ENCODE measurements at regions of chr6 and their contacts with region 1.

Region 1: DNA sequence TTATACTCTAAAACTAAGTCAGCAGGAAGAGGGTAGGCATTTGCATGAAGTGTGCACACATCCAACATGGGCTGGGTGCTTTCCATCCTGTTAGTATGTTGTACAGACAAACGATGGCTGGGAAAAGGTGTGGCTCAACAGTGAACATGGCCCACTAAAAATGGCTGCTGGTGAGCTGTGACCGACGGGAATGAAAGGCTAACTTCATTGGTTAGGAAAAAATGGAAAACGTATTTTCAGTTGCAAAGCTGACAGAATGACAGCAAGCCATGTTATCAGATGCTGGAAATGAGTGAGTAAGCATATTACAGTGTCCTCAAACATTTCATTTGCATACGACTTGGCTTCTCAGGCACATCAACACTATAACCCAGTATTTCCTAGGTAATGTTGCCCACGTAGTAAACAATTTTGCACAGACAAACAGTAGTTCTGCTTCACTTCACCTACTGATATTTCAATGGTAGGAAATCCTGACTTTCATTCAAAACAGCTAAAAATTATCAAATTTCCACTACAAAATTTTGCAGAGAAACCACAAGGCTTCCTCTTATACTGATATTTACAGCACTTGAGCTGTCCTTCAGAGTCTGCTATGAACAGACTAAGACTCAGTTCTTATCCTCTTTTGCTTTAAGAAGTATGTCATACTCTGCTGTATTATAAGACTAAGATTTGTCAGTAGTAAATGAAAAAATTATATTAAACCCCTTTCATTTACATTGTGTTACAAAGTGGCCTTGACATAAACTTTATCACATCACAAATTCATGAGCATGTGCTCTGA is 98.9 kb downstream of the IRF4 start:
- DNase-seq: peak in 1 of 5 donors; percentile 44
- H3K4me3 ChIP-seq: no peak overlapping the region
- H3K4me3 Mint-ChIP-seq: peak overlapping the region in 7 of 8 donors; percentile 57 to 87 (median 74)
- H3K27ac ChIP-seq: no peak overlapping the region
- H3K27ac Mint-ChIP-seq: peak overlapping the region; percentile 38 to 90 (median 81)
- H3K4me1 ChIP-seq: peaks cover 65% of the 10 kb centered on the region
- H3K4me1 Mint-ChIP-seq: peaks cover 55 to 68% (median 62%) of the 10 kb centered on the region in 4 donors
- H3K27me3 ChIP-seq: no peaks in the 10 kb centered on the region
- H3K27me3 Mint-ChIP-seq: no peaks in the 10 kb centered on the region

Region 2: GRCh38 chr6:399785-400534 is 90.5 kb before region 1 on chr6:
- CTCF ChIA-PET with region 1: no interaction called
- POLR2A ChIA-PET with region 1: interaction called, 3 read pairs
- intact Hi-C with region 1: loop called (anchors 5 kb)
- DNase-seq: peak; percentile 22 to 67 (median 29)
- H3K4me3 ChIP-seq: no peak overlapping the region
- H3K4me3 Mint-ChIP-seq: peak overlapping the region in 7 of 8 donors; percentile 17 to 55 (median 47)
- H3K27ac ChIP-seq: no peak overlapping the region
- H3K27ac Mint-ChIP-seq: peak overlapping the region; percentile 8 to 79 (median 55)
- H3K4me1 ChIP-seq: peaks cover 40% of the 10 kb centered on the region
- H3K4me1 Mint-ChIP-seq: peaks cover 26 to 49% (median 43%) of the 10 kb centered on the region in 4 donors
- H3K27me3 ChIP-seq: no peaks in the 10 kb centered on the region
- H3K27me3 Mint-ChIP-seq: peaks cover 0 to 1% of the 10 kb centered on the region in 2 donors

Region 3: GRCh38 chr6:446418-447366 is 43.8 kb before region 1 on chr6:
- CTCF ChIA-PET with region 1: interaction called, 6 read pairs
- POLR2A ChIA-PET with region 1: interaction called, 20 read pairs
- intact Hi-C with region 1: loop called (anchors 5 kb)
- DNase-seq: peak; percentile 67 to 96 (median 76)
- H3K4me3 ChIP-seq: peak overlapping the region; percentile 28 to 60
- H3K4me3 Mint-ChIP-seq: peak overlapping the region; percentile 78 to 92 (median 82)
- H3K27ac ChIP-seq: peak overlapping the region; percentile 54
- H3K27ac Mint-ChIP-seq: peak overlapping the region; percentile 81 to 95 (median 88)
- H3K4me1 ChIP-seq: peaks cover 53% of the 10 kb centered on the region
- H3K4me1 Mint-ChIP-seq: peaks cover 33 to 54% (median 48%) of the 10 kb centered on the region in 4 donors
- H3K27me3 ChIP-seq: no peaks in the 10 kb centered on the region
- H3K27me3 Mint-ChIP-seq: peaks cover 0 to 2% of the 10 kb centered on the region in 2 donors

Region 4: GRCh38 chr6:474453-475185 is 15.8 kb before region 1 on chr6:
- CTCF ChIA-PET with region 1: interaction called, 9 read pairs
- POLR2A ChIA-PET with region 1: interaction called, 13 read pairs
- intact Hi-C with region 1: loop called (anchors 2 kb)
- DNase-seq: peak; percentile 66 to 77 (median 68)
- H3K4me3 ChIP-seq: peak overlapping the region; percentile 32 to 38
- H3K4me3 Mint-ChIP-seq: peak overlapping the region; percentile 30 to 80 (median 75)
- H3K27ac ChIP-seq: no peak overlapping the region
- H3K27ac Mint-ChIP-seq: peak overlapping the region in 5 of 7 donors; percentile 22 to 88 (median 59)
- H3K4me1 ChIP-seq: peaks cover 34% of the 10 kb centered on the region
- H3K4me1 Mint-ChIP-seq: peaks cover 33 to 44% (median 37%) of the 10 kb centered on the region in 4 donors
- H3K27me3 ChIP-seq: no peaks in the 10 kb centered on the region
- H3K27me3 Mint-ChIP-seq: no peaks in the 10 kb centered on the region

Region 5: GRCh38 chr6:506508-506907 is 16.1 kb after region 1 on chr6:
- CTCF ChIA-PET with region 1: interaction called, 6 read pairs
- POLR2A ChIA-PET with region 1: interaction called, 10 read pairs
- intact Hi-C with region 1: loop called (anchors 2 kb)
- DNase-seq: no peak
- H3K4me3 ChIP-seq: no peak overlapping the region
- H3K4me3 Mint-ChIP-seq: peak overlapping the region in 1 of 8 donors; percentile 45
- H3K27ac ChIP-seq: no peak overlapping the region
- H3K27ac Mint-ChIP-seq: peak overlapping the region in 2 of 7 donors; percentile 51 to 62
- H3K4me1 ChIP-seq: peaks cover 50% of the 10 kb centered on the region
- H3K4me1 Mint-ChIP-seq: peaks cover 55 to 81% (median 70%) of the 10 kb centered on the region in 4 donors
- H3K27me3 ChIP-seq: no peaks in the 10 kb centered on the region
- H3K27me3 Mint-ChIP-seq: no peaks in the 10 kb centered on the region